ENCODE measurements at regions of chr2 and their contacts with region 1.

Region 1: DNA sequence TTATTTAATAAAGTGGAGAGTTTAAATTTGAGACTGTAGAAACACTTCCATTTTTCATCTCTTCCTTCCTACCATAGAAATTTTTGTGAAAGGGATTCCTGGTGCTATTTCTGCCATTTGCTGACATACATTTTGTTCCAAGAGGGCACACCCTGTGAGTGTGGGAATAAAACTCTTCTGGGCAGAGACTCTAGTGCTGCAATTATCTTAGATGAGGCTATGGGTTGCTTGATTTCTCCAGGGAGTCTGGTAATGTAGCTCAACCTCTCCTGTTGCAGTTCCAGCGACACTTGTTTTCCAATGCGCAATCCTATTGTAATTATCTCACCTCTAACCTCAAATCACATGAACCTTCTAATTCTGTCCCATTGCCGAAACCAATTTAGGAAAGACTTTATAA is 60.1 kb upstream of the ZSWIM2 start:
- DNase-seq: no peak
- ATAC-seq: no peak
- H3K4me3 ChIP-seq: no peak overlapping the region
- H3K4me3 Mint-ChIP-seq: no peak overlapping the region
- H3K27ac ChIP-seq: no peak overlapping the region
- H3K27ac Mint-ChIP-seq: no peak overlapping the region
- H3K4me1 ChIP-seq: no peaks in the 10 kb centered on the region
- H3K4me1 Mint-ChIP-seq: no peaks in the 10 kb centered on the region
- H3K27me3 ChIP-seq: peaks cover 0 to 4% of the 10 kb centered on the region in 2 experiments
- H3K27me3 Mint-ChIP-seq: peaks cover 0 to 4% of the 10 kb centered on the region in 2 donors

Region 2: GRCh38 chr2:186962085-186962747 is 53.1 kb after region 1 on chr2:
- CTCF ChIA-PET with region 1: no interaction called
- POLR2A ChIA-PET with region 1: interaction called in 1 of 2 experiments, 10 read pairs
- DNase-seq: no peak
- ATAC-seq: no peak
- H3K4me3 ChIP-seq: no peak overlapping the region
- H3K4me3 Mint-ChIP-seq: no peak overlapping the region
- H3K27ac ChIP-seq: no peak overlapping the region
- H3K27ac Mint-ChIP-seq: no peak overlapping the region
- H3K4me1 ChIP-seq: no peaks in the 10 kb centered on the region
- H3K4me1 Mint-ChIP-seq: no peaks in the 10 kb centered on the region
- H3K27me3 ChIP-seq: no peaks in the 10 kb centered on the region
- H3K27me3 Mint-ChIP-seq: no peaks in the 10 kb centered on the region